ENCODE measurements at regions of chr3 and their contacts with region 1.

Region 1: DNA sequence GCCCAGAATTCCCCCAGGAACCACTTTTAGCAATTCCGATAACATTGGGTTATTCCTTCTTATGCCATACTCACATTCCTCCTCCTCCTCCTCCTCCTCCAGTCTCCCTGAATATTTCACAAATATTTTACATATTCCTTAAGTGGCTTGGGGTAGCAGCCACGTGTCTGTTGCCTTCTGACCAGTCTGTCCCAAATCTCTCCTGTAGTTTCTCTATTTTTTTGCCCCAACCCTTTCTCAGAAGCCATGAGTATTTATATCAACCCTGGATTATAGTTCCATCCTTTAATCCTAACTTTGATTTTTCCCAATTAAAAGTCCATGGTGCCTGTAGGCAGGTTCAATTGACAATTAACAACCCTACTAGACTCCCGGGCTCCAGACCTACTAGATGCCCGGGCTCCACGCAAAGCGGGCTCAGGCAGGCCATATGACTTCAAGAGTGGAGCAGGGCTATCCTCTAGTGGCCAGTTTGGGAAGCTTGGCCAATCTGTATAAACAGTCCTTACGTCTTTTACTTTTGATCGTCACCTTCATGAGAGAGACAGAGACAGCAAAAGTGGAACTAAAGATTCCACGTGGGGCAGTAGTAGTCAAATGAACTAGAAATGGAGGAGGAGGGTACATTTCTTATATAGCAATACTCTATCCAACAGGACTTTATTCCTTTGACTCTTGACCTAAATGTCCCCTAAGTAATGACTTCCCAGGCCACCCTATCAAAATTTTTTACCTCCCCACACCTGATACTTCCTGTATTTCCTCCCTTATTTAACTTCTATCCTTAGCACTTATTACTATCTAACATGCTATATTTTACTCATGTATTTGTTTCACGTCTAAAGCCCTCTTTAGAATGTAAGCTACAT is 69.7 kb downstream of the USF3 start:
- DNase-seq: no peak
- H3K4me3 ChIP-seq: peak overlapping the region; percentile 1 to 21 (median 14)
- H3K27ac ChIP-seq: no peak overlapping the region
- H3K4me1 ChIP-seq: no peaks in the 10 kb centered on the region
- H3K27me3 ChIP-seq: no peaks in the 10 kb centered on the region
- CTCF ChIP-seq: peak; percentile 24 to 81 (median 67)
- POLR2A ChIP-seq: no peak

Region 2: GRCh38 chr3:113607219-113607596 is 19.5 kb before region 1 on chr3:
- intact Hi-C with region 1: loop called (anchors 1 kb)
- DNase-seq: no peak
- H3K4me3 ChIP-seq: no peak overlapping the region
- H3K27ac ChIP-seq: no peak overlapping the region
- H3K4me1 ChIP-seq: no peaks in the 10 kb centered on the region
- H3K27me3 ChIP-seq: no peaks in the 10 kb centered on the region
- CTCF ChIP-seq: no peak
- POLR2A ChIP-seq: no peak

Measured in breast epithelium (tissue), 4 donors.